Activated naive CD4-positive, alpha-beta T cell treated with anti-CD3 and anti-CD28 coated beads for 36 hours (primary cell): ENCODE measurements at regions of chr14 and their contacts with region 1.

Region 1: DNA sequence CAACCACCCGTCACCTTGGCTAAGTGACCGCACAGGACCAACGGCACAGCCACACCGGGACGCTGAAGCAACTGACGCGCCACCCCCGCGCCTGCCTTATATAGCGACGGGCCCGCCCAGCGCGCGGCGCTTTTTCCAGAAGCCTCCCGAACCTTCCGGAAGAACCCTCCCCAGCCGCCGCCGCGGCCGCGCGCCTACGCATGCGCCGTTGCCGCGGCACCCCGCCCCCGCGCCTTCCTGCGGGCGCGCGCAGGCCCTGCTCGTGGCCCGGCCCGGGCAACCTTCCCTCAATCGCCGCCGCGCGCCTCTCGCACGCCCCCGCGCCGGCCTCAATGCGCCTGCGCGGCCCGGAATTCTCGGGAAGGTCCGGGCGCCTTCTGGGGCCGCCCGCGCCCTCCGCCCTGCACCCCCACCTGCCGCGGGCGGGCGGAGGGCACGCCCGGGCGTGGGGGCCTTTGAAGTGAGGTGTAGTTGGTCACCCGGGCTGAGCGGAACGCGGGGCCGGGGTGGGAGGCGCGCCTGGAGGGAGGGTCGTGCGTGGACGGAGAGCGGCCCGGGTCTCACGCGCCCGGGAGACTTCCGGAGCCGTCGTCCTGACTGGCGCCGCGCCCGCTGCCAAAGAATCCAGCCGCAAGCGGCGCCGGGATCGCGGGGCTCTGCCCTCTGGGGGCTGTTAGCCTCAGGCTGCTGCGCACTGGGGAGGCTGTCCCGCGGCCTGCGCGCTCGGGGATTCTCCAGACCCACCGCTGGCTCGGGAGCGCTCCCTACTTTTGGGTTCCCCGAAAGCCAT is at the start of gene HSP90AA1:
- DNase-seq: peak; percentile 92
- H3K4me3 Mint-ChIP-seq: peak within 1 kb of the TSS; percentile 97
- H3K27ac Mint-ChIP-seq: peak within 1 kb of the TSS; percentile 95
- H3K4me1 Mint-ChIP-seq: peaks cover 49% of the 10 kb centered on the region
- H3K27me3 Mint-ChIP-seq: no peaks in the 10 kb centered on the region
- total RNA-seq, gene HSP90AA1: 1,286 to 1,366 TPM

Region 2: GRCh38 chr14:101761032-101761880 is 325.9 kb before region 1 on chr14 and contains the start of gene PPP2R5C:
- CTCF ChIA-PET with region 1: no interaction called
- intact Hi-C with region 1: loop called (anchors 1 kb)
- DNase-seq: peak; percentile 85
- H3K4me3 Mint-ChIP-seq: peak within 1 kb of the TSS; percentile 91
- H3K27ac Mint-ChIP-seq: peak within 1 kb of the TSS; percentile 79
- H3K4me1 Mint-ChIP-seq: peaks cover 42% of the 10 kb centered on the region
- H3K27me3 Mint-ChIP-seq: no peaks in the 10 kb centered on the region
- total RNA-seq, gene PPP2R5C: 280 to 294 TPM

Region 3: DNA sequence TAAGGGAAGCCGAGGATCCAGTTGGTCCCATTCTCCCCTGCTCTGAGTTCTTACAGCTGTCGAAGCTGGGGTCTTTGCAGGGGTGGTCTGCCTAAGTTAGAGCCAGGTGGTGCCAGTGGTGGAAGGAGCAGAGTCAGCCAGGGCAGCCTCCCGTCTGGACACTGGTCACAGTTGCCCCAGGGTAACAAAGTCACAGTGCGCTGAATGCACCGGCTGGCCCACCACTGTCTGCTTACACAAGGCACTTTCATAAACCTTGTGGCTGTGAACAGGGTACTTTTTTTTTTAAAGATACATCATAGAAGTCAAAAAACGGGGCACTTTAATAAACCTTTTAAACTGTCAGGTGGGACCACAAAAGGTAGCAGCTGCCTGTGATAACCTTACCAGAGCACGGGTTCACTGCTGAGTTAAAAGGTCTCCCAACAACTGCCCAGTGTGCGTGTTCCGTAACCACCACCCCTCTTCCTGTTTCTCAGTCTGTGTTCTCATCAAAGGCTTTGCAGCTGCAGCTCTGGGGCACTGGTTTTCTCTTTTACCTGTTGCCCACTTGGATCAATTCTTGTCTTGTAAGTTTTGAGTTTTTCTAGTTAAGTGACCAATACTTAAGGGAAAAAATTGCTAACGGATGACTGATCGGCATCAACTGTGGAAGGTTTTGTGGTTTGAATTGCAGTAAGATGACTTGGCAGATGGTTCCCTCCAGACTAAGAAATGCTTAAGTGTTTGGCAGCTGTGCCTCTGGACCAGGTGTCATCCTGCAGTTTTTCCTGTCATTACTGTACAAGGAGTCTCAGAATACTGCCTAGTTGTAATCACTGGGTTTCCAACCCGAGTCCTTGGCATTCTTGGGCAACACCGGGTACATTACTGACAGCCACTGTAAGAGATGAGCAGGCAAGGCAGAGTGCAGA is 66.9 kb before region 1 on chr14:
- CTCF ChIA-PET with region 1: interaction called, 4 read pairs
- intact Hi-C with region 1: loop called (anchors 1 kb)
- DNase-seq: peak; percentile 82
- H3K4me3 Mint-ChIP-seq: no peak overlapping the region
- H3K27ac Mint-ChIP-seq: peak overlapping the region; percentile 87
- H3K4me1 Mint-ChIP-seq: peaks cover 22% of the 10 kb centered on the region
- H3K27me3 Mint-ChIP-seq: no peaks in the 10 kb centered on the region

Region 4: GRCh38 chr14:102304611-102305509 is 217.7 kb after region 1 on chr14 and contains the start of gene MOK:
- CTCF ChIA-PET with region 1: no interaction called
- intact Hi-C with region 1: loop called (anchors 1 kb)
- DNase-seq: peak; percentile 96
- H3K4me3 Mint-ChIP-seq: peak within 1 kb of the TSS; percentile 94
- H3K27ac Mint-ChIP-seq: peak within 1 kb of the TSS; percentile 82
- H3K4me1 Mint-ChIP-seq: peaks cover 9% of the 10 kb centered on the region
- H3K27me3 Mint-ChIP-seq: peaks cover 1% of the 10 kb centered on the region
- total RNA-seq, gene MOK: 1.6 TPM

Region 5: DNA sequence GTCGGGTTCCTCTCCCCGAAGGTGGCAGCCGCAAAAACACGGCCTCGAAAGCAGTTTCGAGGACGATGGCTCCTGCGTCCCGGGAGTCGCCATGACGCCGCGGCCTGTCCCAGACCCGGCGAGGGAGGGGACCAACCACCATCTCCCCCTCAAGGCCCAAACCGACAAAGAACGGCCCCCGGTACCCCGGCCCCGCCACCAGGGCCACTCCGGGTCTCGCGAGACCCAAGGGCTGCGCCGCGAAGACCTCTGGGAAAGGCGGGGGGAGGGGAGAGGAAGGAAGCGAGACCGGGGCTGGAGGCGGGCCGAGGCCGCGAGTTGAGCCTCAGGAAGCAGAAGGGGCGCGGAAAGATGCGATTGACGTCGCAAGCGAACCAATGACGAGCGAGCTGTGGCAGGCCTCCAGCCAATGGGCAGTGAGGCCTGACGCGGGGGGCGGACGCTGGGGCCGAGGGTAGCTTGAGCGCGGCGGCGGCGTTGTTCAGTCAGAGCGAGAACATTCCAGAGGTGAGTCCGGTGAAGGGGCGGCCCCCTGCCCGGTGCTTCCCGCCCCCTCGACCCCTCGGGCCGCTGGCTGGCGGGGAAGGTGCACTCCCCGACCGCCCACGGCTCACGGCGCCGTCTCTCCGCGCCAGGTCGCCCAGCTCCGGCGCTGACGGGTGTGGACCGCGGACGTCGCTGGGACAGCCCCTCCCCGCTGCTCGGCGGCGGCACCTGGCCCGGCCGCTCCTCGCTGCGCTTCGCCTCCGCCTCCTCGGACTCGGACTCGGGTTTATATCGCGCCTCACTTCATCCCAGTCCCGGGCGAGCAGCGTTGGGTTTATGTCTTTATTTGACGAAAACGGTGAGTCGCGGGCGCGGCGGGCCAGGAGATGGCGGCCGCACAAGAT is 1246.8 kb after region 1 on chr14 and contains the start of gene EIF5:
- CTCF ChIA-PET with region 1: no interaction called
- intact Hi-C with region 1: loop called (anchors 5 kb)
- DNase-seq: peak; percentile 99
- H3K4me3 Mint-ChIP-seq: peak within 1 kb of the TSS; percentile 85
- H3K27ac Mint-ChIP-seq: peak within 1 kb of the TSS; percentile 95
- H3K4me1 Mint-ChIP-seq: peaks cover 51% of the 10 kb centered on the region
- H3K27me3 Mint-ChIP-seq: no peaks in the 10 kb centered on the region
- total RNA-seq, gene EIF5: 117 to 121 TPM